ENCODE measurements at regions of chr1 and their contacts with region 1.

Region 1: DNA sequence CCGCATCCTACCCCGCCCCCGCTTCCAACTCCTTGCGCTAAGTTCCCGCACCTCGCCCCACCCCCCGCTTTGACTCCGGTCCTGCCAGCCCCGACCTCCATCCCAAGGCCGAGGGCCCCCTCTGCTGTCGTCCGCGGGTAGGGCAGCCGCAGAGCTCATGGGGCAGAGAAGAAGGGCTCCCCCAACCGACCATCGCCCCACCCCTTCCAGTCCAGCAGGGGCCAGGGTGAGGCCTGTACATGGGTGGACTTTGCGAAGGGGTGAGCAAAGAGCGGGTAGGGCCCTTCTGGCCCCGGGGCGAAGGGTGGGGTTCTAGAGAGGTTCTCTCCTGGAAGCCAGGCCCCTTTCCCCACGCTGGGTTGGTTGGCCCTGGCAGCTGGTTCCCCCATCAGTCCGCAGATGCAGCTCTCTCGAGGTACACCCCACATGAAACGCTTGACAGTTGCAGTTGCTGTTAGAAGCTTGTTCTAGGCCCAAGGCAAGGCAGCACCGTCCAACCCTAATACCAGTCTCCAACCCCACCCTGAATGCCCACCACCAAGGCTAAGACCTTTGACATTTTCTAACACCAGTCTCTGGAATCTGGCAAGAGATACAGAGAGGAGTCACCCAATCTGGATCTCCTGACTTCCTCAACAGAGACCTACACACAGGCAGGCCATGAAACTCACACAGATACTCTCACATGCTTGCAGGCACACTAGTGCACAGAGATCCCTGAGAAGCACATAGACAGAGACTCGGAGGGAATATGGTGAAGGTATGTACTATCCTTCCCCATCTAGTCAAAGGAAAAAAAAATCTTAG is 25.3 kb upstream of the ADGRB2 start:
- DNase-seq: peak; percentile 97
- ATAC-seq: peak; percentile 82
- H3K4me3 Mint-ChIP-seq: peak overlapping the region; percentile 77
- H3K27ac Mint-ChIP-seq: no peak overlapping the region
- H3K4me1 Mint-ChIP-seq: peaks cover 12% of the 10 kb centered on the region
- H3K27me3 Mint-ChIP-seq: no peaks in the 10 kb centered on the region

Region 2: GRCh38 chr1:31564134-31564989 is 225.1 kb before region 1 on chr1:
- CTCF ChIA-PET with region 1: interaction called, 24 read pairs
- POLR2A ChIA-PET with region 1: no interaction called
- DNase-seq: peak; percentile 63
- ATAC-seq: peak; percentile 68
- H3K4me3 Mint-ChIP-seq: no peak overlapping the region
- H3K27ac Mint-ChIP-seq: no peak overlapping the region
- H3K4me1 Mint-ChIP-seq: no peaks in the 10 kb centered on the region
- H3K27me3 Mint-ChIP-seq: peaks cover 19% of the 10 kb centered on the region

Region 3: DNA sequence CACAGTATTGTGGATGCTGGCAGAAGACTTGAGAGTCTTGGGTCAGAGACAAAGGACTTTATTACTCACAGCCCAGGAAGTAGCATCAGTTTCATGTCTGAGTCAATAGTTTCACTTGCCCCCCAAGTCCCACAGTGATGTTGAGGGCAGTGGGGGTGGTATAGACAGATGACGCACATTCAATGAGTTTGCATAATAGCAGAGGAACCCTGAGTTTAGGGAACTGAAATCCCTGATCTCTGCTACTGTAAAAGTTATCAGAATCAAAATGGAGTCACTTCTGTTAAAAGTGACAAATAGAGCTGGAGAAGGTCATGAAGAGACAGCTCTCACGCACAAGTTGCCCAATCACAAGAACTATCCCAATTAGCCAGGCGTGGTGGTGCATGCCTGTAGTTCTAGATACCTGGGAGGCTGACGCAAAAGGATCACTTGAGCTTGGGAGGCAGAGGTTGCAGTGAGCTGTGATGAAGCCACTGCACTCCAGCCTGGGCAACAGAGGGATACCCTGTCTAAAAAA is 183.5 kb before region 1 on chr1:
- CTCF ChIA-PET with region 1: no interaction called
- POLR2A ChIA-PET with region 1: no interaction called
- DNase-seq: peak; percentile 29
- ATAC-seq: peak; percentile 57
- H3K4me3 Mint-ChIP-seq: no peak overlapping the region
- H3K27ac Mint-ChIP-seq: no peak overlapping the region
- H3K4me1 Mint-ChIP-seq: peaks cover 12% of the 10 kb centered on the region
- H3K27me3 Mint-ChIP-seq: peaks cover 14% of the 10 kb centered on the region

Region 4: GRCh38 chr1:31663622-31664452 is 125.6 kb before region 1 on chr1:
- CTCF ChIA-PET with region 1: interaction called, 51 read pairs
- POLR2A ChIA-PET with region 1: no interaction called
- DNase-seq: peak; percentile 59
- ATAC-seq: peak; percentile 38
- H3K4me3 Mint-ChIP-seq: no peak overlapping the region
- H3K27ac Mint-ChIP-seq: no peak overlapping the region
- H3K4me1 Mint-ChIP-seq: no peaks in the 10 kb centered on the region
- H3K27me3 Mint-ChIP-seq: no peaks in the 10 kb centered on the region

Region 5: GRCh38 chr1:31715087-31715872 is 74.2 kb before region 1 on chr1:
- CTCF ChIA-PET with region 1: interaction called, 15 read pairs
- POLR2A ChIA-PET with region 1: no interaction called
- DNase-seq: peak; percentile 30
- ATAC-seq: peak; percentile 47
- H3K4me3 Mint-ChIP-seq: no peak overlapping the region
- H3K27ac Mint-ChIP-seq: no peak overlapping the region
- H3K4me1 Mint-ChIP-seq: peaks cover 10% of the 10 kb centered on the region
- H3K27me3 Mint-ChIP-seq: peaks cover 58% of the 10 kb centered on the region

Region 6: GRCh38 chr1:31762726-31763670 is 26.5 kb before region 1 on chr1:
- CTCF ChIA-PET with region 1: interaction called, 43 read pairs
- POLR2A ChIA-PET with region 1: no interaction called
- DNase-seq: peak; percentile 55
- ATAC-seq: peak; percentile 38
- H3K4me3 Mint-ChIP-seq: peak overlapping the region; percentile 66
- H3K27ac Mint-ChIP-seq: no peak overlapping the region
- H3K4me1 Mint-ChIP-seq: peaks cover 29% of the 10 kb centered on the region
- H3K27me3 Mint-ChIP-seq: peaks cover 61% of the 10 kb centered on the region

Region 7: GRCh38 chr1:31815752-31816500 is 26.5 kb after region 1 on chr1 and contains the start of gene SPOCD1:
- CTCF ChIA-PET with region 1: interaction called, 15 read pairs
- POLR2A ChIA-PET with region 1: interaction called, 4 read pairs
- DNase-seq: peak; percentile 89
- ATAC-seq: peak; percentile 90
- H3K4me3 Mint-ChIP-seq: no peak within 1 kb of the TSS
- H3K27ac Mint-ChIP-seq: peak within 1 kb of the TSS; percentile 57
- H3K4me1 Mint-ChIP-seq: peaks cover 12% of the 10 kb centered on the region
- H3K27me3 Mint-ChIP-seq: no peaks in the 10 kb centered on the region
- total RNA-seq, gene SPOCD1: not detected

Measured in activated CD8-positive, alpha-beta T cell treated with anti-CD3 and anti-CD28 coated beads, Interleukin-2, amount 10 ng/mL, durations not matched to agents 7 days and 5 days (primary cell).